ENCODE measurements at regions of chr17 and their contacts with region 1.

Region 1: DNA sequence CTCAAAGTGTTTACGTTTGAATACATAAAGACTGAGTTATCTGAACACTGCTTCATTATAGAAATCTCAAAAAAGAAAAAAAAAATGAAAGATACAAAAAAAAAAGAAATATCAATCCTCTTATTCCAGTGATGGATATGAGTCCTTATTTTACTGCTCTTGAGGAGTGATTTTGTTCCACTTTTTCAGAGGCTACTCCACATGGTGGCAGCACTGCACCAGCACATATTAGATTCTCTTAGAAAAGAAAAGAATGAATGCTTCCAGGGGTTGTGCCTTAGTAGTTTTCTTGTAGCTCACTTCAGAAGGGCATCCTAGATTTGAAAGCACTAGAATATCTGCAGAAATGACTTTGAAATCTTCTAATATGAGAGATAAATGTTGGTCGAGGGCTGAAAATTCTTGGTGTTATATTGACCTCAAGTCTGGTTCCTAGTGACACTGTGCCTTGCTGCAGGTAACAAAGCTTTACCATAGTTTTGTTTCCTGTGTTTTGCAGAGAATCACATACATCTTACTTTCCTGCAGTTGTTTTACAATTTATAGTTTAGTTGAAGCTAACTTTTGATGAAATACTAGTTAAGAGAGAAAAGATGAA is 25.9 kb downstream of the AP2B1 start:
- DNase-seq: peak in 7 of 10 donors; percentile 35 to 79 (median 59)

Region 2: DNA sequence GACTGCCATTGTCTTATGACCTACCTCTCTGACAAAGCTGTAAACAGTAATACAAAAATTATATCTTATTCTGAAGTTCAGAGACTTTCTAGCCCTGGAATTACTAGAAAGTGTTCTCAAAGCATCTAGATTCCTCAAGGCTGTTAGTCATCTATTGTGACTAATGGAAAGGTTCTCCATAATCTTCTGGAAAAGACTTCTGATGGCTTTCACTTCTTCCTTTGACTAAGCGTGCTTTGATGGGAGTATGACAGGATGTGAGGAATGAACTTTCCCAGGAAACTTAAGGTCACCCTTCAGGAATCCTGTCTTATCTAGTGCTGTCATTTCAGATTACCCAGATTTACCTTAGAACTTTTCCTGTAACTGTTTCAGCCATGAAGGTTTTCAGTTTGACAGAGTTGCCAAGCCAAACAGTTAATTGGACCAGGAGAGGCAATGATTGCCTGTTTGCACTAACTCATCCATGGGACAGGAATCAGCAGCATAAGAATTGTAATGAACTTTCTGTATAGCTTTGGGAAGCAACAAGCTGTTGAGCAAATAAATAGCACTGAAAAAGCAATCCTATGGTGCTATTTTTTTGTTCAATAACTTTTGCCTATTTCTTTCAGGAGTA is 17.6 kb after region 1 on chr17:
- intact Hi-C with region 1: no loop called
- DNase-seq: no peak

Region 3: GRCh38 chr17:35747540-35748017 is 134.6 kb after region 1 on chr17:
- intact Hi-C with region 1: loop called (anchors 1 kb)
- DNase-seq: peak; percentile 60 to 96 (median 80)

Measured in posterior cingulate gyrus (tissue), 11 donors.